ENCODE measurements at regions of chr15 and their contacts with region 1.

Region 1: DNA sequence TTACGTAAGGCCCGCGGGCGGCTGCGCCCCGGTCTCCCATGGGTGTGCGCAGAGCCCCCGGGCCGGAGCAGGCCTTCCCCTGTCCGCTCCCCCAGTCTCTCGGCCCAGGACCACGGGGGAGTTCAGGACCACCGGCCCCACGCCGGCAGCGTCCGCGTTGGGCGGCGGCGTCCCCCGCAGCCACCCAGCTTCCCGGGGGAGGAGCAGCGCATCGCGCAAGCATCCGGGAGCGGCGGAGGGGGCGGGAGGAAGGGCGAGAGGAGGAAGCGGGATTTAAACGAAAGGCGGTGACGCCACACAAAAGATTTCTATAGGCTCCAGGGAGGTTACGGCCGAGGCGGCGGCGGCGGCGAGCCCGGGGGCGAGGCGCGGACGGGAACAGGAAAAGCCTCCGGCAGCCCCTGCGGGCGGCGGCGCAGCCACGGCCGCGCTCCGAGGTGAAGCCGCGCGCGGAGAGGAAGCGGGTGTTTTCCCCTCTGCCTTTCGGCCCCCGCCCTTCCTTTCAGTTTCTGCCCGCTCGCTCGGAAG is at the start of gene TLNRD1:
- DNase-seq: peak; percentile 80 to 87 (median 83)
- H3K4me3 ChIP-seq: peak within 1 kb of the TSS; percentile 70 to 93 (median 92)
- H3K4me3 Mint-ChIP-seq: peak within 1 kb of the TSS; percentile 94 to 96
- H3K27ac ChIP-seq: peak within 1 kb of the TSS; percentile 91 to 93
- H3K27ac Mint-ChIP-seq: peak within 1 kb of the TSS; percentile 90 to 97 (median 94)
- H3K4me1 ChIP-seq: peaks cover 17 to 33% of the 10 kb centered on the region in 2 donors
- H3K4me1 Mint-ChIP-seq: peaks cover 36% of the 10 kb centered on the region
- H3K27me3 ChIP-seq: no peaks in the 10 kb centered on the region
- H3K27me3 Mint-ChIP-seq: peaks cover 0 to 6% (median 0%) of the 10 kb centered on the region in 3 donors
- CTCF ChIP-seq: no peak
- polyA plus RNA-seq, gene TLNRD1: 2.6 to 12.6 (median 3.4) TPM

Region 2: GRCh38 chr15:81023483-81024264 is 23.0 kb after region 1 on chr15:
- intact Hi-C with region 1: loop called in 1 of 2 experiments (anchors 2 kb)
- DNase-seq: peak; percentile 85 to 93 (median 93)
- H3K4me3 ChIP-seq: peak overlapping the region in 2 of 3 experiments; percentile 4 to 64
- H3K4me3 Mint-ChIP-seq: peak overlapping the region; percentile 57 to 80
- H3K27ac ChIP-seq: peak overlapping the region; percentile 84 to 95
- H3K27ac Mint-ChIP-seq: peak overlapping the region; percentile 94 to 99 (median 98)
- H3K4me1 ChIP-seq: peaks cover 35 to 44% of the 10 kb centered on the region in 2 donors
- H3K4me1 Mint-ChIP-seq: peaks cover 35% of the 10 kb centered on the region
- H3K27me3 ChIP-seq: no peaks in the 10 kb centered on the region
- H3K27me3 Mint-ChIP-seq: no peaks in the 10 kb centered on the region
- CTCF ChIP-seq: no peak

Region 3: DNA sequence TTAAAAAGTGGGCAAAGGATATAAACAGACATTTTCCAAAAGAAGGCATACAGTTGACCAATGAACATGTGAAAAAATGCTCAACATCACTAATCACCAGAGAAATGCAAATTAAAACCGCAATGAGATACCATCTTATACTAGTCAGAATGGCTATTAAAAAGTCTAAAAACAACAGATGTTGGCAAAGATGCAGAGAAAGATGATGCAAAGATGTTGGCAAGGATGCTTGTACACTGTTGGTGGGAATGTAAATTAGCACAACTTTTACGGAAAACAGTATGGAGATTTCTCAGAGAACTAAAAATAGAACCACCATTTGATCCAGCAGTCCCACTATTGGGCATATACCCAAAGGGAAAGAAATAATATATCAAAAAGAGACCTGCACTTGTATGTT is 53.5 kb after region 1 on chr15:
- intact Hi-C with region 1: loop called in 1 of 2 experiments (anchors 10 kb)
- DNase-seq: no peak
- H3K4me3 ChIP-seq: no peak overlapping the region
- H3K4me3 Mint-ChIP-seq: no peak overlapping the region
- H3K27ac ChIP-seq: no peak overlapping the region
- H3K27ac Mint-ChIP-seq: no peak overlapping the region
- H3K4me1 ChIP-seq: peaks cover 14 to 20% of the 10 kb centered on the region in 2 donors
- H3K4me1 Mint-ChIP-seq: peaks cover 17% of the 10 kb centered on the region
- H3K27me3 ChIP-seq: no peaks in the 10 kb centered on the region
- H3K27me3 Mint-ChIP-seq: peaks cover 0 to 5% (median 2%) of the 10 kb centered on the region in 3 donors
- CTCF ChIP-seq: no peak

Region 4: GRCh38 chr15:81060907-81061306 is 60.2 kb after region 1 on chr15:
- intact Hi-C with region 1: loop called (anchors 5 to 10 kb)
- DNase-seq: no peak
- H3K4me3 ChIP-seq: no peak overlapping the region
- H3K4me3 Mint-ChIP-seq: no peak overlapping the region
- H3K27ac ChIP-seq: no peak overlapping the region
- H3K27ac Mint-ChIP-seq: peak overlapping the region in 1 of 7 donors; percentile 56
- H3K4me1 ChIP-seq: peaks cover 13 to 18% of the 10 kb centered on the region in 2 donors
- H3K4me1 Mint-ChIP-seq: peaks cover 16% of the 10 kb centered on the region
- H3K27me3 ChIP-seq: no peaks in the 10 kb centered on the region
- H3K27me3 Mint-ChIP-seq: peaks cover 0 to 6% (median 0%) of the 10 kb centered on the region in 3 donors
- CTCF ChIP-seq: no peak

Region 5: GRCh38 chr15:81296673-81297072 is 296.0 kb after region 1 on chr15:
- intact Hi-C with region 1: loop called in 1 of 2 experiments (anchors 10 kb)
- DNase-seq: peak; percentile 87 to 91 (median 89)
- H3K4me3 ChIP-seq: peak overlapping the region; percentile 67 to 91 (median 78)
- H3K4me3 Mint-ChIP-seq: peak overlapping the region; percentile 97 to 99
- H3K27ac ChIP-seq: peak overlapping the region; percentile 92 to 97
- H3K27ac Mint-ChIP-seq: peak overlapping the region; percentile 98 to 99 (median 99)
- H3K4me1 ChIP-seq: peaks cover 86 to 96% of the 10 kb centered on the region in 2 donors
- H3K4me1 Mint-ChIP-seq: peaks cover 96% of the 10 kb centered on the region
- H3K27me3 ChIP-seq: no peaks in the 10 kb centered on the region
- H3K27me3 Mint-ChIP-seq: peaks cover 0 to 5% (median 2%) of the 10 kb centered on the region in 3 donors
- CTCF ChIP-seq: no peak

Measured in CD14-positive monocyte (primary cell).